HepG2 (cell line): ENCODE measurements at regions of chr12 and their contacts with region 1.

Region 1: DNA sequence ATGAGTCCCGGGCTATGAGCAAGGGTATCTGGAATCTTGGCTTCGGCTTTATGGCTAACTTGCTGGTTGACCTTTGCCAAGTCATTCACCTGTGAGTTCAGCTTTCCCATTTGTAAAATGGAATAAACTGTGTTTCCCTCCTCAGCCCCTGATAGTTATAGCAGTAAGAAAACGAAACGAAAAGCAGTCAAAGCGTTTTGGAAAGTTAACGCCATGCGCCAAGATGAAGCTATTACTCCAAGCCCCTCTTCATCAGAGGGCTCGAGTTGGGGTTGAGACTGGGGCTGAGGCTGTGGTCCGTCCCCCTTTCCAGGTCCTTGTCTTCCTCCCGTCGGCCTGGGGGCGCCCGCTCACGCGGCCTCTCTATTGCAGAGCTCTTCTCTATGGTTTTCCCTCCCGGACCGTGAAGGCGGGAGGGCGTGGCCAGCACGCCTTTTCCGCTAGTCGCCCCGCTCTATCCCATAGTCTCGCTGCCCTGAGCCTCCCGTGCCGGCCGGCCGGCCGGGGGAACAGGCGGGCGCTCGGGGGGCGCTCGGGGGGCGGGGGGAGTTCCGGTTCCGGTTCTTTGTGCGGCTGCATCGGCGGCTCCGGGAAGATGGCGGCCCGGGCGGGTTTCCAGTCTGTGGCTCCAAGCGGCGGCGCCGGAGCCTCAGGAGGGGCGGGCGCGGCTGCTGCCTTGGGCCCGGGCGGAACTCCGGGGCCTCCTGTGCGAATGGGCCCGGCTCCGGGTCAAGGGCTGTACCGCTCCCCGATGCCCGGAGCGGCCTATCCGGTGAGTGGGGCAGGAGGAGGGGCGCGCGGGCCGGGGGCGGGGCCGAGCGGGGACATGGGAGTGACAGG is at the start of gene SMARCD1:
- DNase-seq: peak; percentile 90
- ATAC-seq: peak; percentile 87
- H3K4me3 ChIP-seq: peak within 1 kb of the TSS; percentile 58 to 77 (median 73)
- H3K27ac ChIP-seq: peak within 1 kb of the TSS; percentile 88
- H3K4me1 ChIP-seq: peaks cover 82% of the 10 kb centered on the region
- H3K27me3 ChIP-seq: no peaks in the 10 kb centered on the region
- CTCF ChIP-seq: peak; percentile 88
- EP300 ChIP-seq: 0 out of 4 replicates have a peak, but pooled peaks of 1 of the 2 experiments have one; percentile 30
- POLR2A ChIP-seq: peak; percentile 33 to 47; a peak in 2 of 4 replicates
- RAD21 ChIP-seq: no peak; the same call in 1 of the 2 replicates
- total RNA-seq, gene SMARCD1: 54.6 and 64.9 TPM in 2 replicates

Region 2: DNA sequence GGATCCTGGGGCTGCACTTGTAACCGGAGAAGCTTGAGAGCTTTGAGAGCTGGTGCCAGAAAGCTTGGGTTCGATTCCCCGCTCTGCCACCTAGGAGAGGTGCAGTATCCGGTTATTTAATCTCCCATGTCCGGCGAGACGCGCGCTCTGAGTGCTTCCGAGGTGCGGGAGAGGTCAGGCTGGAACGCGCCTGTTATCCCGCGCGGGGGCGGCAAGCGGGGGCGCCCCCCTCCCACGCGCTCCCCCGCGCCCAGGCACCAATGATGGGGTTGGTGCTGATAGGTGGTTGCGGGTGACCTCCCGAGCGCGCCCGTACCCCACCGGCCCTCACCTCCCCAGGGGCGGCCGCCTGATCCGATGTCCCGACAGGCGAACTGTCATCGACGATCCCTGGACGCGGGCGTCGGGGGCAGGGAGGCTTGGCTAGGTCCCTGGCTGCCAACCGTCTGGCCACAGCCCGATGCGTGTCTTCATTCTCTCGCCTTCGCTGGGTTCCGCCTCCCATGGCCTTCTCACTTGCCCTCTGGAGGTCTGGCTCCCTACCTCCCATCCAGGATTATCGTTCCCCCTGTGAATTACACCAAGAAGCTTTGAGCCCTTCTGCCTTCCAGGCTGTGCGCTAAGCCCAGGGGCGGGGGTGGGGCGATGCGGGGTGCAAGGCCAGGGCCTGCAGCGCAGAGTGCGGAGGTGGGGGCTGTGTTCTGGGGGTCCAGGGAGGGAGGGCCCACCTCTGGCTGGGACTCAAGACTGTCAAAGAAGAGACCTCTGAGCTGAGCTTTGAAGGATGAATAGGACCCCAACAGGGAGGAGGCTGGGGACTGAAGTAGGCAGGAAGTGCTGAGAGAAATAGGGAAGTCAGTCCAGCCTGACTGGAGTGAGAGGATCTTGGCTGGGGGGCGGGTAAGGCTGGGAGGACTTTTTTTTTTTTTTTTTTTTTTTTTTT is 52.1 kb before region 1 on chr12:
- CTCF ChIA-PET with region 1: no interaction called
- POLR2A ChIA-PET with region 1: no interaction called
- in situ Hi-C with region 1: no loop called
- intact Hi-C with region 1: no loop called
- DNase-seq: no peak
- ATAC-seq: no peak
- H3K4me3 ChIP-seq: no peak overlapping the region
- H3K27ac ChIP-seq: no peak overlapping the region
- H3K4me1 ChIP-seq: peaks cover 28% of the 10 kb centered on the region
- H3K27me3 ChIP-seq: peaks cover 0 to 1% of the 10 kb centered on the region in 2 experiments; a peak in 1 of 5 replicates
- CTCF ChIP-seq: no peak
- EP300 ChIP-seq: no peak
- POLR2A ChIP-seq: no peak
- RAD21 ChIP-seq: no peak

Region 3: DNA sequence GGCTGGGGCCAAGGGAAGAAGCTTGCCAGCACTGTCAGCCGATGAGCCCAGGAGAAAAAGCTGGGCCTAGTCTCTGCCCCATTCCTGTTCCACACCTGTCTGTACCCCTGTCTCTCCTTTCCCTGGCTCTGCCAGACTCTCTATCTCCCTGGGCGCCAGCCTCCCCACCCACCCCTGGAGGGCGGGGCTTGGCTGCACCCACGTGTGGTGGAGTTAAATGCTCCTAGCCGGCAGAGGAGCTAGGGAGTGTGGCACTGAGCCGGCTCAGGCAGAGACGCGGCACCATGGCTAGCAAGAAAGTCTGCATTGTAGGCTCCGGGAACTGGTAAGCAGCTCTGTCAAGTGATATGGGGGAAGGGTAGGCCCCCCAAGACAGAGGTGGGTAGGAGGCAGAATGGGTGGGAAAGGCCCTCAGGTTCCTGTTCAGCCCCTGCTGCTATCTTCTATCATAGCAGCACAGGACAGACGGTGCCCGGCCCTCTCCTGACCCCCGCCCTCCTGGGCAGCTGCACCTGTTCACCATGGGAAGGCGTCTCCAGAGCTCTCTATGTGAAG is 18.8 kb after region 1 on chr12 and contains the start of gene GPD1:
- CTCF ChIA-PET with region 1: no interaction called
- POLR2A ChIA-PET with region 1: interaction called, 265 read pairs
- in situ Hi-C with region 1: no loop called
- intact Hi-C with region 1: no loop called
- DNase-seq: peak; percentile 67
- ATAC-seq: peak; percentile 89
- H3K4me3 ChIP-seq: peak within 1 kb of the TSS; percentile 58 to 75 (median 64)
- H3K27ac ChIP-seq: peak within 1 kb of the TSS; percentile 73
- H3K4me1 ChIP-seq: peaks cover 68% of the 10 kb centered on the region
- H3K27me3 ChIP-seq: no peaks in the 10 kb centered on the region
- CTCF ChIP-seq: peak; percentile 11; the same call in 1 of the 2 replicates
- EP300 ChIP-seq: no peak
- POLR2A ChIP-seq: peak in 1 of 2 experiments; percentile 87; a peak in 2 of 4 replicates
- RAD21 ChIP-seq: no peak
- total RNA-seq, gene GPD1: 30.6 and 38.1 TPM in 2 replicates

Region 4: DNA sequence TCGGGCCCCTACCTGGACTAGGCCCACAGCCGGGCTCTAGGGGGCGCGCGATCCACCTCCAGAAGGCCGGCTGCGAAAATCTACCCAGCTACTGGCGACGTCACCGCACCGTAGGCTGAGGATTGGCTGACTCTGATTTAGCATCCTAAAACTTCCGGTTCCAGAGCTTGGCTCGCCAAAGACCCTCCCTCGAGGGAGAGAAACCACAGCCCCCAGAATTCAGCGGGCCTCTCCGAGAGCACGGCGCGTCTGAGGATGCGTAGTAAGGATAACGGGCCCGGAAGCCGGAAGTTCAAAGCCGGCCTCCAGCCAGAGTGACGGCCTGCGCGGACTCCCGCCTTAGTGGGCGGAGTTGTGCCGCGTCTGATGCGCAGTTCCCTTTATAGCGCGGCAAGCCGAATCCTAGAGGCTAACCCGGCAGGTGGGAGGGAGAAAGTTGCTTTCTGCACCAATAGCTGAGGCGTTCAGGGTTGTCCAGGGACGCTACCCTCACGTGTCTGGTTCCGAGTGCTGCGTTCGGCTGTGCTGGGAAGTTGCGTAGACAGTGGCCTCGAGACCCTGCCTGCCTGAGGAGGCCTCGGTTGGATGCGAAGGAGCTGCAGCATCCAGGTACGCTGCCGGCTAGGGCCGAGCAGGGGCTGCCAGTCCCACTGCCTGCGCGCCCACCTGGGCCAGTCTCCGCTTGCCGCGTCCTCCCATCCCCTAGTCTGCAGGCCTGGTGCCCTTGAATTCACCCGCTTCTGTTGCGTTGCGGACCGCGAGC is 26.9 kb after region 1 on chr12 and contains the start of gene COX14:
- CTCF ChIA-PET with region 1: interaction called, 4 read pairs
- POLR2A ChIA-PET with region 1: interaction called, 265 read pairs
- in situ Hi-C with region 1: no loop called
- intact Hi-C with region 1: loop called (anchors 2 kb)
- DNase-seq: peak; percentile 99
- ATAC-seq: peak; percentile 82
- H3K4me3 ChIP-seq: peak within 1 kb of the TSS; percentile 90 to 94 (median 92)
- H3K27ac ChIP-seq: peak within 1 kb of the TSS; percentile 95
- H3K4me1 ChIP-seq: peaks cover 56% of the 10 kb centered on the region
- H3K27me3 ChIP-seq: no peaks in the 10 kb centered on the region; a peak in 1 of 5 replicates
- CTCF ChIP-seq: peak; percentile 97
- EP300 ChIP-seq: peak in 1 of 2 experiments; percentile 21; a peak in 1 of 4 replicates
- POLR2A ChIP-seq: peak in 1 of 2 experiments; percentile 97; a peak in 2 of 4 replicates
- RAD21 ChIP-seq: peak; percentile 50
- total RNA-seq, gene COX14: 71.6 and 82.0 TPM in 2 replicates

Region 5: GRCh38 chr12:50167041-50167828 is 82.2 kb after region 1 on chr12 and contains the start of gene CERS5:
- CTCF ChIA-PET with region 1: no interaction called
- POLR2A ChIA-PET with region 1: interaction called, 31 read pairs
- in situ Hi-C with region 1: no loop called
- intact Hi-C with region 1: no loop called
- DNase-seq: peak; percentile 96
- ATAC-seq: peak; percentile 98
- H3K4me3 ChIP-seq: peak within 1 kb of the TSS; percentile 80 to 98 (median 93)
- H3K27ac ChIP-seq: peak within 1 kb of the TSS; percentile 90
- H3K4me1 ChIP-seq: peaks cover 51% of the 10 kb centered on the region
- H3K27me3 ChIP-seq: no peaks in the 10 kb centered on the region; a peak in 1 of 5 replicates
- CTCF ChIP-seq: no peak; the same call in none of the 2 replicates
- EP300 ChIP-seq: 0 out of 4 replicates have a peak, but pooled peaks of 1 of the 2 experiments have one; percentile 3
- POLR2A ChIP-seq: peak; percentile 71 to 87
- RAD21 ChIP-seq: peak; percentile 67
- total RNA-seq, gene CERS5: 15.3 and 22.3 TPM in 2 replicates

Region 6: DNA sequence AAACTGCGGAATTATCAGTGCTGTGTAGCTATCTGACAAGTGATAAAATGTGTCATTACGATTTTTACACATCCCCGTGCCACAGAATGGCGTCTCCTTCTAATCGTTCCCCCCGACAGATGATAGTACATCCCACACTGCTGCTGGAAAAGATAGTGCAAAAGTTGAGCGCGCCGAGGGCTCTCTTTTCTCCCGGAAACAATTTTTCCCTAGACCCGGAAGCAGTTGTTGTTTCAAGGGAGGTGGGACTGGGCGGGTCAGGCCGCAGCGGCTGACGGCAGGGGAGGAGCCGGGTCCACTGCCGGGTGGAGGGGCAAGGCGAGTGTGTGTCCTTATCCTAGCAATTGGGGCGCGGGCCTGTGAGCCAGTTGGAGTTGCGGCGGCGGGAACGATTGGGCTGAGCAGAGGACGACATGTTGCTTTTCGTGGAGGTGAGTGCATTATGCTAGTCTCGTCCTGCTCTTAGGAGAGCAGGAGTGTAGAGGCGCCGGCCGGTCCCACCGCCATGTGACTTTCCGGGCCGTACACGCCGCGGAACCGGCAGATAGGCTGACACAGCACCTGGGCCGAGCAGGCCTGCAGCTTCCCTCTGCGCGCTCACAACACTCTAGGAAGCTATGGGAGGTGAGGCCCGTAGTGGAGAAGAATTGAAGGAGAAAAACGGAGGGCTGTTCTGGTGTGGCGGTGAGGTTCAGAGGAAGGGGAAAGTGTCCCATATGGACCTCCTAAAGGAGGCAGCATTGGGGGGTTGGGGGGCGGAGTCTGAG is 315.8 kb after region 1 on chr12 and contains the start of gene LARP4:
- CTCF ChIA-PET with region 1: no interaction called
- POLR2A ChIA-PET with region 1: no interaction called
- in situ Hi-C with region 1: no loop called
- intact Hi-C with region 1: loop called (anchors 2 kb)
- DNase-seq: peak; percentile 95
- ATAC-seq: peak; percentile 94
- H3K4me3 ChIP-seq: peak within 1 kb of the TSS; percentile 81 to 96 (median 86)
- H3K27ac ChIP-seq: peak within 1 kb of the TSS; percentile 94
- H3K4me1 ChIP-seq: peaks cover 51% of the 10 kb centered on the region
- H3K27me3 ChIP-seq: no peaks in the 10 kb centered on the region; a peak in 1 of 5 replicates
- CTCF ChIP-seq: 0 out of 2 replicates have a peak, but pooled peaks have one; percentile 18
- EP300 ChIP-seq: peak; percentile 8 to 15; a peak in 1 of 4 replicates
- POLR2A ChIP-seq: peak; percentile 92 to 95
- RAD21 ChIP-seq: no peak
- total RNA-seq, gene LARP4: 42.7 and 56.2 TPM in 2 replicates

Region 7: GRCh38 chr12:50799908-50800307 is 714.9 kb after region 1 on chr12:
- CTCF ChIA-PET with region 1: no interaction called
- POLR2A ChIA-PET with region 1: no interaction called
- in situ Hi-C with region 1: no loop called
- intact Hi-C with region 1: no loop called
- DNase-seq: no peak
- ATAC-seq: no peak
- H3K4me3 ChIP-seq: no peak overlapping the region
- H3K27ac ChIP-seq: no peak overlapping the region
- H3K4me1 ChIP-seq: no peaks in the 10 kb centered on the region
- H3K27me3 ChIP-seq: no peaks in the 10 kb centered on the region; a peak in 1 of 5 replicates
- CTCF ChIP-seq: no peak
- EP300 ChIP-seq: no peak
- POLR2A ChIP-seq: no peak
- RAD21 ChIP-seq: no peak